ENCODE measurements at regions of chr3 and their contacts with region 1.

Region 1: GRCh38 chr3:4986782-4987537 is 7.7 kb downstream of the BHLHE40 start:
- DNase-seq: peak; percentile 86
- H3K4me3 Mint-ChIP-seq: peak overlapping the region; percentile 77
- H3K27ac Mint-ChIP-seq: peak overlapping the region; percentile 87
- H3K4me1 Mint-ChIP-seq: peaks cover 60% of the 10 kb centered on the region
- H3K27me3 Mint-ChIP-seq: no peaks in the 10 kb centered on the region

Region 2: GRCh38 chr3:5006755-5007202 is 19.8 kb after region 1 on chr3:
- CTCF ChIA-PET with region 1: interaction called, 10 read pairs
- POLR2A ChIA-PET with region 1: interaction called, 31 read pairs
- intact Hi-C with region 1: loop called (anchors 1 kb)
- DNase-seq: peak; percentile 94
- H3K4me3 Mint-ChIP-seq: peak overlapping the region; percentile 25
- H3K27ac Mint-ChIP-seq: peak overlapping the region; percentile 81
- H3K4me1 Mint-ChIP-seq: peaks cover 52% of the 10 kb centered on the region
- H3K27me3 Mint-ChIP-seq: no peaks in the 10 kb centered on the region

Region 3: GRCh38 chr3:5144316-5145011 is 157.5 kb after region 1 on chr3:
- CTCF ChIA-PET with region 1: no interaction called
- POLR2A ChIA-PET with region 1: no interaction called
- intact Hi-C with region 1: no loop called
- DNase-seq: no peak
- H3K4me3 Mint-ChIP-seq: no peak overlapping the region
- H3K27ac Mint-ChIP-seq: no peak overlapping the region
- H3K4me1 Mint-ChIP-seq: peaks cover 64% of the 10 kb centered on the region
- H3K27me3 Mint-ChIP-seq: no peaks in the 10 kb centered on the region